H1 (cell line): ENCODE measurements at regions of chr6 and their contacts with region 1.

Region 1: GRCh38 chr6:37582306-37582705 is 82.6 kb upstream of the CCDC167 start:
- DNase-seq: no peak
- H3K4me3 ChIP-seq: no peak overlapping the region
- H3K27ac ChIP-seq: no peak overlapping the region
- H3K4me1 ChIP-seq: peaks cover 0 to 9% (median 6%) of the 10 kb centered on the region in 4 experiments; a peak in 4 of 7 replicates
- H3K27me3 ChIP-seq: no peaks in the 10 kb centered on the region; a peak in 2 of 7 replicates
- CTCF ChIP-seq: no peak
- EP300 ChIP-seq: no peak
- POLR2A ChIP-seq: no peak
- RAD21 ChIP-seq: no peak

Region 2: GRCh38 chr6:37483917-37484785 is 98.2 kb before region 1 on chr6:
- CTCF ChIA-PET with region 1: interaction called, 10 read pairs
- POLR2A ChIA-PET with region 1: no interaction called
- DNase-seq: peak; percentile 23 to 93
- H3K4me3 ChIP-seq: no peak overlapping the region
- H3K27ac ChIP-seq: no peak overlapping the region
- H3K4me1 ChIP-seq: peaks cover 0 to 15% (median 4%) of the 10 kb centered on the region in 4 experiments; a peak in 5 of 7 replicates
- H3K27me3 ChIP-seq: no peaks in the 10 kb centered on the region
- CTCF ChIP-seq: peak in 2 of 3 experiments; percentile 91 to 97; a peak in 3 of 4 replicates
- EP300 ChIP-seq: no peak
- POLR2A ChIP-seq: no peak
- RAD21 ChIP-seq: peak; percentile 97 to 98

Region 3: GRCh38 chr6:37594895-37595294 is 12.6 kb after region 1 on chr6:
- CTCF ChIA-PET with region 1: interaction called, 15 read pairs
- POLR2A ChIA-PET with region 1: no interaction called
- DNase-seq: no peak
- H3K4me3 ChIP-seq: no peak overlapping the region
- H3K27ac ChIP-seq: no peak overlapping the region
- H3K4me1 ChIP-seq: peaks cover 0 to 4% (median under 1%) of the 10 kb centered on the region in 4 experiments; a peak in 4 of 7 replicates
- H3K27me3 ChIP-seq: no peaks in the 10 kb centered on the region; a peak in 1 of 7 replicates
- CTCF ChIP-seq: no peak
- EP300 ChIP-seq: no peak
- POLR2A ChIP-seq: no peak
- RAD21 ChIP-seq: no peak

Region 4: GRCh38 chr6:37607944-37608343 is 25.6 kb after region 1 on chr6:
- CTCF ChIA-PET with region 1: interaction called, 15 read pairs
- POLR2A ChIA-PET with region 1: interaction called, 3 read pairs
- DNase-seq: no peak
- H3K4me3 ChIP-seq: no peak overlapping the region
- H3K27ac ChIP-seq: no peak overlapping the region
- H3K4me1 ChIP-seq: no peaks in the 10 kb centered on the region
- H3K27me3 ChIP-seq: no peaks in the 10 kb centered on the region
- CTCF ChIP-seq: peak in 2 of 3 experiments; percentile 32 to 37; a peak in 2 of 4 replicates
- EP300 ChIP-seq: no peak
- POLR2A ChIP-seq: no peak
- RAD21 ChIP-seq: peak; percentile 8 to 56; a peak in 3 of 4 replicates

Region 5: DNA sequence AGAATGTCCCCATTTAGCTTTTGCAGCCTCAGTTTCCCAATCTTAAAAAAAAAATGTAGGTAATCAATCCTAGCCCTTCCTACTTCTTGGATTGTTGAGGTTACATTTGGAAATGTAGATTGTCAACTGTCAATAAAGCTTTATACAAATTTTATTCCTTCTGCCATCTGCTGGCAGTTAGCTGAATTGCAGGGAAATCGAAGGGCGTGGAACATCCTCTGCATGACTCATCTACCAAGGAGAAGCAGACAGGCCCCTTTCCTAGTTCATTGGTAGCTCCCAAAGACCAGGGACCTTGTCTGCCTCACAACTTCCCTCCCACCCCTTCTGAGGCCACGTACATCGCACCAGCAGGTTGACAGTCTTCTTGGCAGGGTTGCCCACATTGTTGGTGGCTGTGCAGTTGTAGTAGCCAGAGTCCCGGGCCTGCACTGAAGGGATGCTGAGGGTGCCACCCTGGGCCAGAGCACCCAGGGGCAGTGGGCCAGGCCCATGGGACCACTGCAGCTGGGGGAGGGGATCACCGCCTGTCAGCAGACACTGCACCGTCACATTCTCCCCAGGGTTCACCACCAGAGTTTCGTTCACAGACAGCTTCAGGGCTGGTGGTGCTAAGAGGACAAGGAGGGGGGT is 71.7 kb after region 1 on chr6:
- CTCF ChIA-PET with region 1: interaction called, 16 read pairs
- POLR2A ChIA-PET with region 1: no interaction called
- DNase-seq: peak; percentile 15 to 81
- H3K4me3 ChIP-seq: no peak overlapping the region
- H3K27ac ChIP-seq: no peak overlapping the region
- H3K4me1 ChIP-seq: peaks cover 0 to 6% (median 1%) of the 10 kb centered on the region in 4 experiments; a peak in 3 of 7 replicates
- H3K27me3 ChIP-seq: peaks cover 3 to 21% (median 16%) of the 10 kb centered on the region in 4 experiments
- CTCF ChIP-seq: peak in 2 of 3 experiments; percentile 62 to 86; a peak in 3 of 4 replicates
- EP300 ChIP-seq: no peak
- POLR2A ChIP-seq: no peak
- RAD21 ChIP-seq: peak; percentile 25 to 36; a peak in 2 of 4 replicates